ENCODE measurements at regions of chr7 and their contacts with region 1.

Region 1: GRCh38 chr7:37732253-37732652 is 48.7 kb downstream of the GPR141 start:
- DNase-seq: peak; percentile 56
- ATAC-seq: peak; percentile 89
- H3K4me3 ChIP-seq: no peak overlapping the region
- H3K27ac ChIP-seq: no peak overlapping the region
- H3K4me1 ChIP-seq: peaks cover 4% of the 10 kb centered on the region
- H3K27me3 ChIP-seq: no peaks in the 10 kb centered on the region
- CTCF ChIP-seq: peak; percentile 73 to 79 (median 77)
- EP300 ChIP-seq: no peak
- POLR2A ChIP-seq: no peak
- RAD21 ChIP-seq: peak; percentile 90

Region 2: DNA sequence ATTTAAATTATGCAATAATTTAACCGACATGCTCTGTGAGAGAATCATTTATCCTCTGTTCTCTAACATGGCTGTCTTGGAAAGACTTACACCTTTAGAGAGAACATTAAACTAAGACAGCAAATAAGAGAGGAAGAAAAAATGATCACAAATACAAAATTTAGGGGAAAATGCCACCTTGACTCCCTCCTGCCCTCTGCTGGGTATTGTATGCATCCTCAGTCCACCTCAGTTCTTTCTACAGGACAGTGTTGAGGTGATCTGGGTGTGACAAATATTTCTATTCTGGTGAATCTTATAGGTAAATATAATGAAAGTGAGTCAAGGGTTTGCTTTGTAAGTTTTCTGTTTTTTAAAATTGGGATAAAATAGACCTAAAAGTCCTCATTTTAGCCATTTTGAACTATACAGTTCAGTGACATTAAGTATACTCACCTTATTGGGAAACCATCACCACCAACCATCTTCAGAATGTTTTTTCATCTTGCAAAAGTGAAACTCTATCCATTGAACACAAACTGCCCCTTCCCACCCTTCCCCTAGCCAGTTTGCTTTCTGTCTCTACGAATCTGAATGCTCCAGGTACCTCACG is 222.1 kb before region 1 on chr7:
- CTCF ChIA-PET with region 1: interaction called, 34 read pairs
- POLR2A ChIA-PET with region 1: no interaction called
- RAD21 ChIA-PET with region 1: no interaction called
- SMC1A ChIA-PET with region 1: interaction called, 8 read pairs
- in situ Hi-C with region 1: no loop called
- intact Hi-C with region 1: loop called (anchors 2 kb)
- DNase-seq: no peak
- ATAC-seq: peak; percentile 80
- H3K4me3 ChIP-seq: no peak overlapping the region
- H3K27ac ChIP-seq: no peak overlapping the region
- H3K4me1 ChIP-seq: no peaks in the 10 kb centered on the region
- H3K27me3 ChIP-seq: peaks cover 0 to 4% of the 10 kb centered on the region in 2 experiments; a peak in 2 of 4 replicates
- CTCF ChIP-seq: peak; percentile 59 to 77 (median 76)
- EP300 ChIP-seq: no peak
- POLR2A ChIP-seq: no peak
- RAD21 ChIP-seq: peak; percentile 71

Region 3: DNA sequence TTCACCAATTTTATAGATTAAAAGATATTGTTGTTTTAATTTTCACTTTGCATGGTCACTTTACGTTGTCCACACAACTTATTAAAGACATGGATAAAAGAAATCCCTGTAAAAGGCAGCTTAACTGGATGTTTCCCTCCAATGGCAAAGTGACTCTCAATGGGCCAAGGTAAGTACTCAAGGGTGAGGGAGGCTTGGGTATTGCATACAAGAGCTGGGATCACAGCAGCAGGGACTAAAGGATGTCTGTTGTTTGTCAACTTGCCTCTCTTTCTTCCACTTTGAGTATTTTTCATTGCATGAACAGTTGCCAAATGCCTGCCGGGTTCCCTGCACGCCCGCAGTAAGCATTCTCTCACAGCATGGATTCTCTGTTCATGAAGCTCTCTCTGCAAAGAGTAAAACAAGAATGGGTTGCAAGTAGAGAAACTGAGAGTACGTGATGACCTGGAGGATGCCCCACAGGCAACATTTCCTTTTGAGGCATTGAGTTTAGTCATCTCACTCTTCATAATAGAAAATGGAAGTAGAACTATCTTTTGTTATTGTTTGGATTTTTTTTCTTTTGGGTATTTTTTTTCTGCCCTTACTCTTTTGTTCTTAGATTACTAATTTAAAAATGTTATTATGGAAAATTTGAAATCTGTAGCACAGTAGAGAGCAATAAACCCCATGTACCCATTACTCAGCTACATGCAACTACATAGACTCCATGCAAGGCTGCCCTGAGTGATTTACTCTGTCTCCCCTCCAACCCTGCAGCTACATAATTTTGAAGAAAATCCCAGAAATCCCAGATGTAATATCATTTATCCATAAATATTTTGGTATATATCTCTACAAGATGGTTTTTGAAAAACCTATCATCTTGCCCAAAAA is 22.4 kb before region 1 on chr7:
- CTCF ChIA-PET with region 1: interaction called, 8 read pairs
- POLR2A ChIA-PET with region 1: interaction called, 4 read pairs
- RAD21 ChIA-PET with region 1: interaction called, 16 read pairs
- SMC1A ChIA-PET with region 1: interaction called, 23 read pairs
- in situ Hi-C with region 1: no loop called
- intact Hi-C with region 1: no loop called
- DNase-seq: peak; percentile 75
- ATAC-seq: peak; percentile 99
- H3K4me3 ChIP-seq: peak overlapping the region; percentile 25; the same call in 1 of the 2 replicates
- H3K27ac ChIP-seq: peak overlapping the region; percentile 40; the same call in 1 of the 2 replicates
- H3K4me1 ChIP-seq: peaks cover 13% of the 10 kb centered on the region
- H3K27me3 ChIP-seq: no peaks in the 10 kb centered on the region
- CTCF ChIP-seq: no peak
- EP300 ChIP-seq: peak in 1 of 2 experiments; percentile 20; a peak in 1 of 4 replicates
- POLR2A ChIP-seq: no peak
- RAD21 ChIP-seq: no peak

Region 4: GRCh38 chr7:37759526-37759925 is 27.3 kb after region 1 on chr7:
- CTCF ChIA-PET with region 1: interaction called, 12 read pairs
- POLR2A ChIA-PET with region 1: no interaction called
- RAD21 ChIA-PET with region 1: interaction called, 3 read pairs
- SMC1A ChIA-PET with region 1: interaction called, 12 read pairs
- in situ Hi-C with region 1: no loop called
- intact Hi-C with region 1: no loop called
- DNase-seq: no peak
- ATAC-seq: no peak
- H3K4me3 ChIP-seq: no peak overlapping the region
- H3K27ac ChIP-seq: no peak overlapping the region
- H3K4me1 ChIP-seq: no peaks in the 10 kb centered on the region
- H3K27me3 ChIP-seq: no peaks in the 10 kb centered on the region
- CTCF ChIP-seq: no peak
- EP300 ChIP-seq: no peak
- POLR2A ChIP-seq: no peak
- RAD21 ChIP-seq: no peak

Region 5: GRCh38 chr7:37826825-37827224 is 94.6 kb after region 1 on chr7:
- CTCF ChIA-PET with region 1: interaction called, 87 read pairs
- POLR2A ChIA-PET with region 1: interaction called, 4 read pairs
- RAD21 ChIA-PET with region 1: interaction called, 21 read pairs
- SMC1A ChIA-PET with region 1: interaction called, 45 read pairs
- in situ Hi-C with region 1: loop called (anchors 5 kb)
- intact Hi-C with region 1: loop called (anchors 2 kb)
- DNase-seq: no peak
- ATAC-seq: peak; percentile 83
- H3K4me3 ChIP-seq: 0 out of 2 replicates have a peak overlapping the region, but pooled peaks have one; percentile 2
- H3K27ac ChIP-seq: no peak overlapping the region
- H3K4me1 ChIP-seq: peaks cover 7% of the 10 kb centered on the region; the same call in 1 of the 2 replicates
- H3K27me3 ChIP-seq: no peaks in the 10 kb centered on the region
- CTCF ChIP-seq: no peak
- EP300 ChIP-seq: no peak
- POLR2A ChIP-seq: no peak
- RAD21 ChIP-seq: no peak

Measured in GM12878 (cell line).